Prostate gland (tissue), 2 donors: ENCODE measurements at regions of chr14 and their contacts with region 1.

Region 1: DNA sequence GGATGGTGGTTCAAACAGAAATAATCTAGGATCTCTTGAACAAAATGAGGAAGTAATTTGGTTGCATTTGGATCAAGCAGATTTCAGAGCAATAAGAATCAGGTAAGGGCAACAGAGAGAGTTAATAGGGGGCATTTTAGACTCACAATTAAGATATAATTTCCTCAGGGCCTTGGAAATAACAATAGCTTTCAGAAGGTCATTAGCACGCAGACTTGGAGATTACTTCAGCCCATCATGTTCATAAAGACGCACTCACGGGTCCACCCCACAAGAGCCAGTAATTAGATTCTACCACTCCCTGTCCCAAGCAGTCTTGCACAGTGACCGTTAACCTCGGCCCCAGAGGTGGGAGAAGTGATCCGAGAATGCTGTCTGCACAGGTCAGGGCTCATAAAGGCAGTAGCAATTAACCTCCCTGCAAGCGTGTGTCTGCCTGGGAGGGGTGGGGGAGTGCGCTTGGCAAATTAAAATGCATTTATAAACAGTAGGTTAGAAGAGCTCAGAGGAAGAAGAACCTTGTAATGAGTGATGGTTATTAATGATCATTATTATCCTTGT is 125.7 kb upstream of the CCDC196 start:
- DNase-seq: no peak
- H3K4me3 ChIP-seq: no peak overlapping the region
- H3K27ac ChIP-seq: no peak overlapping the region
- H3K4me1 ChIP-seq: no peaks in the 10 kb centered on the region
- H3K27me3 ChIP-seq: no peaks in the 10 kb centered on the region
- CTCF ChIP-seq: no peak
- POLR2A ChIP-seq: no peak

Region 2: DNA sequence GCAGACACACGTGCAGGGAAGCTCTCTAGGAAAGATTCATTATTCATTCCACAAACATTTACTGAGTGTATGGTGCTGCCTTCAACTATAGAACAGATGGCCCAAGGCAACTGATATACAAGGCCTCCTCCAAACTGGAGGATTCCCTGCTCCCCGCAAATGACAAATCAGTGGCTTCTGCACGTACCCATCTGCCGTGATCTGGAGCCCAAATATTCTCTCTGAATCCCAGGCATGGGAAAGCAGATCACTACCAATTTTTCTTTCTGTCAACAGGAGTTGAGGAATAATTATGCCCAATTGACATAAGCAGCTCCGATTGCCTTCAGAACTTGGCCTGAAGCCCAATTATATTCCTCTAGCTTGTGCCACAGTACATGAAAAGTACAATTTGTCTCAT is 48.5 kb before region 1 on chr14:
- intact Hi-C with region 1: no loop called
- DNase-seq: no peak
- H3K4me3 ChIP-seq: no peak overlapping the region
- H3K27ac ChIP-seq: no peak overlapping the region
- H3K4me1 ChIP-seq: no peaks in the 10 kb centered on the region
- H3K27me3 ChIP-seq: no peaks in the 10 kb centered on the region
- CTCF ChIP-seq: no peak
- POLR2A ChIP-seq: no peak

Region 3: GRCh38 chr14:66403183-66403582 is 42.7 kb after region 1 on chr14:
- intact Hi-C with region 1: loop called (anchors 5 kb)
- DNase-seq: no peak
- H3K4me3 ChIP-seq: no peak overlapping the region
- H3K27ac ChIP-seq: no peak overlapping the region
- H3K4me1 ChIP-seq: no peaks in the 10 kb centered on the region
- H3K27me3 ChIP-seq: no peaks in the 10 kb centered on the region
- CTCF ChIP-seq: peak in 3 of 4 experiments; percentile 24 to 39 (median 39)
- POLR2A ChIP-seq: no peak